Activated CD4-positive, alpha-beta T cell treated with anti-CD3 and anti-CD28 coated beads, Interleukin-2, amount 10 ng/mL, durations not matched to agents 7 days and 5 days (primary cell): ENCODE measurements at regions of chr1 and their contacts with region 1.

Region 1: DNA sequence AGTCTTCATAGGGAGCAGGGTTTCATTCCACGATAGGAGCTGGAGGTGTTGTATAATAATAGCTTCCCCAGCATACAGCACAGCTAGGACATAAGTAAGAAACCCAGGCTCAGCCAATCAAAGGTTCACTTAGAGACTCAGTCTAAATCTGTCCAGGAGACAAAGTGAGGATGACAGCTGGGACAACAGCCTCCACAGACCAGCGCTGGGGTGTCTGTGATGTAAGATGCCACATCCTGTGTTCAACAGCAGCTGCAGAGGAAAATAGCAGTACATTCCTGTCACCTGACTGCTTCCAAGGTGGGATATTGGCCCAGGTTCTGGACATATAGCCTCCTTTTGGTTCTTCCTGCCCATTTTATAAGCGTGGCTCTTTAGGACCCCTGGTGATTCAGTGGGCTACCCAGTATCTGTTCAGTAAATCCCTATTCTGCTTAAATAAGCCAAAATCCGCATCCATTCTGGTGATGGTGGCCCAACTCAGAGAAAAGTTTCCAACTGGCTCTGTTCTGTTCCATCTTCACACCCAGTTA is 176.8 kb upstream of the SYT6 start:
- DNase-seq: peak; percentile 55
- H3K4me3 Mint-ChIP-seq: no peak overlapping the region
- H3K27ac Mint-ChIP-seq: peak overlapping the region; percentile 44
- H3K4me1 Mint-ChIP-seq: peaks cover 66% of the 10 kb centered on the region
- H3K27me3 Mint-ChIP-seq: peaks cover 15% of the 10 kb centered on the region

Region 2: GRCh38 chr1:114289306-114289705 is 41.2 kb before region 1 on chr1:
- CTCF ChIA-PET with region 1: no interaction called
- POLR2A ChIA-PET with region 1: no interaction called
- DNase-seq: no peak
- H3K4me3 Mint-ChIP-seq: no peak overlapping the region
- H3K27ac Mint-ChIP-seq: no peak overlapping the region
- H3K4me1 Mint-ChIP-seq: no peaks in the 10 kb centered on the region
- H3K27me3 Mint-ChIP-seq: no peaks in the 10 kb centered on the region

Region 3: DNA sequence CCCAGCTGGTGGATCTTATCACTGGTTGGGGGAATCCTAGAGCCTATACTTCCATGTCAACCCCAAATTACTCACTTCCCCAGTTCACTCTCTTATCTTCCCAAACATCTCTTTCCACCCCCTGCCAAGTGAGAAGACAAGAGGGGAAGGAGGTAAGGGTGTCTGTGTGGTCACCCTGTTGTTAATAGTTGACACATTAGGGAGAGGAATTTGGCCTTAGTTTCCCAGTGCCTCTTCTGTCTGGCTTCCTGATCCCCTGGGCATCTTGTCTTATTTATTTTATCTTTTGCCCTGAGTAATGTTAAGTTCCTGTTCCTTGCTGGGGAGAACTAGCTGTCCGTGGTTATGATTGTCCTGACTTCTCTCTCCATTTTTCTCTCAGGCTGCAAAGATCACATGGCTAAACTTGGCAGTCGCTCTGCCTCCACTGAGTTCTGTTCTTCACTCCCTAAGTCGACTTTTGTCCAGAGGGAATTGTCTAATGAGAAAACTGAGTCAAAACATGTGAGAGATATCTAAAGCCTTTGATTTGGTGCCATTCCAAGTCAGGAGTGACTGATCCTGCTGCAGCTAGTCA is 19.7 kb before region 1 on chr1:
- CTCF ChIA-PET with region 1: no interaction called
- POLR2A ChIA-PET with region 1: no interaction called
- DNase-seq: no peak
- H3K4me3 Mint-ChIP-seq: no peak overlapping the region
- H3K27ac Mint-ChIP-seq: no peak overlapping the region
- H3K4me1 Mint-ChIP-seq: no peaks in the 10 kb centered on the region
- H3K27me3 Mint-ChIP-seq: peaks cover 17% of the 10 kb centered on the region

Region 4: DNA sequence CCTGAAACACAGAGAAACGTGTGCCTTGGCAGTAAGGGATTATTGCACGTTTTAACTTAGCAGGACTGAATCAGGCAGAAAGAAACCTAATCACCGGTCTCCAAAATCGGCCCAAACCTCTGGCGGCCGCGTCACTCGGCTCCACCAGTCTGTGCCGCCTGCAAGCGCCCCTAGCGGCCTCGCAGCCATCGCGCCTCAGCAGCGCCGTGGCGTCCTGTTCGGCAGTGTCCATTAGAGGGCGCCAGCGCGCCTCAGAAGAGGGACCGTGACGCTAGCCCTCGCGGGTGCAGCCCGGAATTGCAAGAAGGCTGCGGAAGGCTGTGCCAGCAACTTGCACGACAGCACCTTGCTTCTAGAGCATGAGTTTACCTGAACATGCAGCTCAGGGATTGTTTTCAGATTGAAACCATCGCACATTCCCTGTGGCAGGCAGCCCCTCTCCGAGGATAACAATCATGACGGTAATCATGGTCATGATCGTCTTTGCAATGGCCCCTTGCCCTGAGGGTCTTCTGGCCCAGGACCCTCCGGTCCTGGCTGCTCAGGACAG is 16.0 kb after region 1 on chr1:
- CTCF ChIA-PET with region 1: interaction called, 13 read pairs
- POLR2A ChIA-PET with region 1: no interaction called
- DNase-seq: peak; percentile 97
- H3K4me3 Mint-ChIP-seq: peak overlapping the region; percentile 80
- H3K27ac Mint-ChIP-seq: peak overlapping the region; percentile 95
- H3K4me1 Mint-ChIP-seq: peaks cover 35% of the 10 kb centered on the region
- H3K27me3 Mint-ChIP-seq: peaks cover 1% of the 10 kb centered on the region

Region 5: GRCh38 chr1:114505148-114505561 is 174.6 kb after region 1 on chr1:
- CTCF ChIA-PET with region 1: no interaction called
- POLR2A ChIA-PET with region 1: no interaction called
- DNase-seq: no peak
- H3K4me3 Mint-ChIP-seq: no peak overlapping the region
- H3K27ac Mint-ChIP-seq: no peak overlapping the region
- H3K4me1 Mint-ChIP-seq: peaks cover 67% of the 10 kb centered on the region
- H3K27me3 Mint-ChIP-seq: no peaks in the 10 kb centered on the region